ENCODE measurements at regions of chr11 and their contacts with region 1.

Region 1: GRCh38 chr11:288328-289144 is at the start of gene PGGHG:
- DNase-seq: peak in 4 of 5 donors; percentile 87 to 94 (median 88)
- ATAC-seq: peak in 2 of 4 donors; percentile 88 to 90
- H3K4me3 ChIP-seq: peak within 1 kb of the TSS; percentile 61 to 92 (median 78)
- H3K27ac ChIP-seq: peak within 1 kb of the TSS in 11 of 12 donors; percentile 57 to 83 (median 71)
- H3K4me1 ChIP-seq: peaks cover 0 to 24% (median 12%) of the 10 kb centered on the region in 12 donors
- H3K27me3 ChIP-seq: peaks cover 0 to 37% (median 19%) of the 10 kb centered on the region in 9 donors
- CTCF ChIP-seq: no peak
- POLR2A ChIP-seq: peak in 1 of 2 donors; percentile 21
- total RNA-seq, gene PGGHG: 4.5 to 11.1 (median 6.2) TPM

Region 2: DNA sequence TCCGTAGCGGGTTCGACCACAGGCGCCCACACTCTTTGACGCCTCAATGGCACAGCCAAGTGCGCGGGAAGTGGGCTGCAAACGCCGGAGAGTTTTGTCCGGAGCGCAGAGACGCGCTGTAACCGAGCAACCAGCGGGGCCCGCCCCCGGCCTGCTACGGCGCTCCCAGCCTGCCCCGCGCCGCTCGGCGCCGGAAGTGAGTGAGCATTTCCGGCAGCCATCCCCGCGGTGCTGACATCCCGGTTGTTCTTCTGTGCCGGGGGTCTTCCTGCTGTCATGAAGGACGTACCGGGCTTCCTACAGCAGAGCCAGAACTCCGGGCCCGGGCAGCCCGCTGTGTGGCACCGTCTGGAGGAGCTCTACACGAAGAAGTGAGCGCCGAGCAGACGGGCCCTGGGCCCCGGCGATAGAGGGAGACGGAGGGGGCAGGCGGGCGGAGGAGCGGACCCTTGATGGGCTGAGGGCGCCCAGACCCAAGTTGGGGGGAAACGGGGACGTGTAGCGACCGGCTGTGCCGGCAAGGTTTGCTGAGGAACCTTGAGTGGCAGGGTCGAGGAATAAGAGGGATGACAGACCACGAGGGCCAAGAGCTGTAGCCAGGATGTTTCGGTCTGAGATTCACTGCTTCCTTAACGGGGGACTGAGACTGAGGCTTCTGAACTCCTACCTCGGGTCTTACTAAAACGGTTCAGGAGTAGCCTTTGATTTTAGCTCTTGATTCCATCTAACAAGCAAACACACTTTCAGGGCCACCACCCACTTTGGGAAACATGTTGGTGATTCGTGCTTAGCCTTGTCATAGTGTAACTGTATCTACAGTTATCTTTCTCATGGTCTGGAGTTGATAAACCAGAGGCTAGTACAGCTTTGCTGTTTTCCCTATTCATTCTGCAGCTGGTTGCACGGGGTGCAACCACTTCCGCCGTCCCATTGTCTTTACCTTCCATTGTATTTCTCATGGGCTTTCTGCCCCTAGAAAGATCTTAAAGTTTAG is 51.5 kb before region 1 on chr11 and contains the start of gene PSMD13:
- intact Hi-C with region 1: loop called in 1 of 10 experiments (anchors 2 kb)
- DNase-seq: peak; percentile 89 to 93 (median 90)
- ATAC-seq: peak; percentile 93 to 97 (median 94)
- H3K4me3 ChIP-seq: peak within 1 kb of the TSS; percentile 83 to 100 (median 94)
- H3K27ac ChIP-seq: peak within 1 kb of the TSS; percentile 91 to 98 (median 95)
- H3K4me1 ChIP-seq: peaks cover 9 to 52% (median 30%) of the 10 kb centered on the region in 12 donors
- H3K27me3 ChIP-seq: no peaks in the 10 kb centered on the region
- CTCF ChIP-seq: peak in 1 of 12 donors; percentile 16
- POLR2A ChIP-seq: peak in 1 of 2 donors; percentile 45
- total RNA-seq, gene PSMD13: 75.1 to 110 (median 87.5) TPM

Region 3: DNA sequence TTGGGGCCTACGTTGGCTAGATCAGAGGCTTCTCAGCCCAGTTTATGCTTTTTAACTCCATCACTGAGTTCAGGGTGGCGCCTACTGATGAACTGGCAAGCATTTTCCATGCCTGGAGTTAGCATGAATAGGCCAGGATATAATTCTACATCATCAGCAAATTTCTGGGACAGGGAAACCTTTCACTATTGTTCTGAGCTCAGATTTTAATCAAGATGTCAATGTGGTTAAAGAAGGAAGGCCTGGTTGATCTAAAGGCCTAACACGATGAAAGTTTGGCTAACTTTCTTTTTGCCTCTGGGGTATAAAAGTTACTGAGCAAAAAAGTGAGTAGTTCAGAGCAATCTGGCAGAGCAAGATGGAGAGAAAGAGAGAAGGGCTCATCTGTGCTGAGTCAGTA is 53.8 kb after region 1 on chr11:
- intact Hi-C with region 1: no loop called
- DNase-seq: no peak
- ATAC-seq: peak in 3 of 4 donors; percentile 36 to 44 (median 38)
- H3K4me3 ChIP-seq: no peak overlapping the region
- H3K27ac ChIP-seq: peak overlapping the region; percentile 21 to 76 (median 53)
- H3K4me1 ChIP-seq: peaks cover 0 to 10% (median 0%) of the 10 kb centered on the region in 12 donors
- H3K27me3 ChIP-seq: no peaks in the 10 kb centered on the region
- CTCF ChIP-seq: no peak
- POLR2A ChIP-seq: no peak

Region 4: GRCh38 chr11:355581-356458 is 67.3 kb after region 1 on chr11:
- intact Hi-C with region 1: no loop called
- DNase-seq: peak; percentile 95 to 97 (median 97)
- ATAC-seq: peak; percentile 75 to 91 (median 89)
- H3K4me3 ChIP-seq: peak overlapping the region in 11 of 12 donors; percentile 1 to 60 (median 48)
- H3K27ac ChIP-seq: peak overlapping the region; percentile 95 to 100 (median 99)
- H3K4me1 ChIP-seq: peaks cover 7 to 43% (median 30%) of the 10 kb centered on the region in 12 donors
- H3K27me3 ChIP-seq: peaks cover 0 to 7% (median 0%) of the 10 kb centered on the region in 9 donors
- CTCF ChIP-seq: peak in 1 of 12 donors; percentile 8
- POLR2A ChIP-seq: peak in 1 of 2 donors; percentile 70

Measured in heart left ventricle (tissue), 16 donors.